Activated B cell treated with CpG ODN at 0.5 μM for 24 hours (primary cell): ENCODE measurements at regions of chr11 and their contacts with region 1.

Region 1: DNA sequence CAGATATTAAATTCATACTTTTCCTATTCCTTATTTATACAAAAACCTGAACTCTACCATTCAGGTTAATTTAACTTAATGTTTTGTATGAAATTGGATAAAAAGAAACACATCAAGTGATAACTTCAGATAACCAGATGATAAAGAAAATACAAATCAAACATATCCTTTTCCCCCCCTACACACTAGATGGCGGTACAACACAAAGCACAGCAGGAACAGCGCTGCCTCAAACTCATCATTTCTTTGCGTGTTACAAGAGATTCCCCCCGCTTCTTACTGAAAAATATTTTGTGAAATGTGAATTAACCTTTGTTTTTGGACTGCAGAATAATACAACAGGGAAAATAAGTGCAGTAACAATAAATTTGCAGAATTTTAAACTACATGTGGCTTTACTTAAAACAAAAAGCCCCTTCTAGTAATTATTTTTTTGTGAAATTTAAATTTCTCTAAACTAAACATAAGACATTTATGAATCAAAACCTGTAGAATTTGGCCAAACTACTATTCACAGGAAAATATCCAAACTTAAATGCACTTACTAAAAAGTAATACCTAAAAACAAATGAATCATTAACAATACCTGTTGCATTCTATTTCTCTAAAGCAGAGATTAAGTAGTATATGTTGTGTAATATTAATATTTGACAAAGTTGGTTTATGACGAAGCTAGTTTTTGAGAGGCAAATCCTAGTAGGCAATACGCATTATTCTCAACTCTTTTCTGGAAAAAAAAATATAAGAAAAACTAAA is 74.4 kb downstream of the ARHGAP32 start:
- DNase-seq: no peak
- ATAC-seq: no peak
- H3K4me3 Mint-ChIP-seq: no peak overlapping the region
- H3K27ac Mint-ChIP-seq: no peak overlapping the region
- H3K4me1 Mint-ChIP-seq: no peaks in the 10 kb centered on the region
- H3K27me3 Mint-ChIP-seq: no peaks in the 10 kb centered on the region
- CTCF ChIP-seq: peak; percentile 92

Region 2: GRCh38 chr11:129331871-129332274 is 214.1 kb after region 1 on chr11:
- CTCF ChIA-PET with region 1: interaction called, 48 read pairs
- POLR2A ChIA-PET with region 1: no interaction called
- intact Hi-C with region 1: loop called (anchors 1 kb)
- DNase-seq: peak; percentile 38
- ATAC-seq: no peak
- H3K4me3 Mint-ChIP-seq: no peak overlapping the region
- H3K27ac Mint-ChIP-seq: no peak overlapping the region
- H3K4me1 Mint-ChIP-seq: peaks cover 2% of the 10 kb centered on the region
- H3K27me3 Mint-ChIP-seq: no peaks in the 10 kb centered on the region
- CTCF ChIP-seq: peak; percentile 72

Region 3: GRCh38 chr11:129695575-129696308 is 578.0 kb after region 1 on chr11:
- CTCF ChIA-PET with region 1: no interaction called
- POLR2A ChIA-PET with region 1: no interaction called
- intact Hi-C with region 1: loop called (anchors 1 kb)
- DNase-seq: peak; percentile 44
- ATAC-seq: peak; percentile 91
- H3K4me3 Mint-ChIP-seq: peak overlapping the region; percentile 76
- H3K27ac Mint-ChIP-seq: no peak overlapping the region
- H3K4me1 Mint-ChIP-seq: peaks cover 8% of the 10 kb centered on the region
- H3K27me3 Mint-ChIP-seq: peaks cover 29% of the 10 kb centered on the region
- CTCF ChIP-seq: no peak

Region 4: GRCh38 chr11:129750349-129751292 is 632.8 kb after region 1 on chr11:
- CTCF ChIA-PET with region 1: interaction called, 4 read pairs
- POLR2A ChIA-PET with region 1: no interaction called
- intact Hi-C with region 1: loop called (anchors 1 kb)
- DNase-seq: peak; percentile 69
- ATAC-seq: peak; percentile 81
- H3K4me3 Mint-ChIP-seq: no peak overlapping the region
- H3K27ac Mint-ChIP-seq: no peak overlapping the region
- H3K4me1 Mint-ChIP-seq: peaks cover 4% of the 10 kb centered on the region
- H3K27me3 Mint-ChIP-seq: peaks cover 27% of the 10 kb centered on the region
- CTCF ChIP-seq: peak; percentile 99